ENCODE measurements at regions of chr4 and their contacts with region 1.

Region 1: DNA sequence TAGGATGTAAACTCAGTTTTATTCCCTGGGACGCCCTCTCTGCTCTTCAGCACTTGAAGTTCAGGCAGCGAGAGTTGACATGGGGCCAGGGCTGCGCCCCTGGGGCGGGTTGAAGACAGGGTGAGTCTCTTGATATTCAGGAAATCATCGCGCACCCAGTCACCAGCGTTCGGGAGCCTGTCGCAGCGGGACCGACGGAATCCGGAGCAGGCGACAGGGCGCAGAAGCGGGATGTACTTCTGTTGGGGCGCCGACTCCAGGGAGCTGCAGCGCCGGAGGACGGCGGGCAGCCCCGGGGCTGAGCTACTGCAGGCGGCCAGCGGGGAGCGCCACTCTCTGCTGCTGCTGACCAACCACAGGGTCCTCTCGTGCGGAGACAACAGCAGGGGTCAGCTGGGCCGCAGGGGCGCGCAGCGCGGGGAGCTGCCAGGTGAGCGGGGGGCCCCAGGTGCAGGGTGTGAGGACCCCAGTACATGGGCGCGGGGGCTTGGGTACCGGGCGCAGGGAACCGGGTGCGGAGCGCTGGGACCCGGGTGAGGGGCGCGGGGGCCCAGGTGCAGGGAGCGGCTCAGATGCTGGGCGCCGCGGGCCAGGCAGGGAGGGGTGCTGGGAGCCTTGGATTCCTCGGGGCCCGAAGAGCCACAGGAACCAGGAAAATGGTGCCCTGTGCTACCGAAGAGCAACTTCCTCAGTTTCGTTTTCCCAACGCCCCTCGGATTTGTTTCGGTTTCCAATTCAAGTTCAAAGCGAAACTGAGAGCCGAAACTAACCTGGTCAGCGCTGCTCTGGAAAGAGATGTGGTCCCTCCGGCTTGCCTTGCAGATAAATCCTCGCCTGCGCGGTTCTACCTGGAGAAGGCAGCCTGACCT is at the start of gene HERC6:
- DNase-seq: peak; percentile 84
- H3K4me3 Mint-ChIP-seq: peak within 1 kb of the TSS; percentile 85
- H3K27ac Mint-ChIP-seq: peak within 1 kb of the TSS; percentile 69
- H3K4me1 Mint-ChIP-seq: peaks cover 40% of the 10 kb centered on the region
- H3K27me3 Mint-ChIP-seq: no peaks in the 10 kb centered on the region
- total RNA-seq, gene HERC6: 9.9 to 10.2 TPM

Region 2: DNA sequence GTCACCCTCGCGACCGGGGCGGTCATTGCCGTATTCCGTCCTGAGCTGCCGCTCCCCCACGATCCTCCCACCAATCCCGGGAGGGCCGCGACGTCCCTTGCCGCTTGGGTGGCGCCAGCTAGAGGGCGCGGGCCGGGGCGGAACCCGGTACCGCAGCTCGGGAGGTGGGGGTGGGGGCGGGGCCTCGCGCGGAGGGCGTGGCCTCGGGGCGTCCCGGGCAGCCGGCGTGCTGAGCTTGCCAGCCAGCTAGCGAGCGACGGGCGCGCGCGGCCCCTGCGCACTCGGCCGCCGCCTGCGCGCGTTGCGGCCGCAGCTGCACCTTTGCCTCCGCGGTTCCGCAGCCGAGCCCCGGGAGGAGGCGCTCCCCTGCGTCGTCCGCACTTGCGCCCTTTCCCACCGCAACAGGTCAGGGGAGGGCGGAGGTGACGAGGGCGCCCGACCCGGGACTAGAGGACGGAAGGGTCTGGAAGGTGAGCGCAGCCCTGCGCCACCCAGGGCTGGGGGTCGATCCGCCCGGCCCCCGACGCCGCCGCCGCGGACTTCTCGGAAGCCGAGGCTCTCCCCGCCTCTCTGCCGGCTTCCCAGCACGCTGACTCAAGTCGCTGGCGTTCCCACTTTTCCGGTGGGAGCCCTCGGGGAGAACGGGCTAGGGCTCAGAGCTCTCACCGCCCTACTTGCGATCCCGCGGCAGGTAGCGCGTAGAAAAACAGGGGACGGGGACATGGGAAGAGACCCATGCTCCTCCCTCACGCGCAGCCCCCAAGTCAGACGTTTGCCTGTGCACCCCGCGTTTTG is 1444.0 kb before region 1 on chr4 and contains the start of gene AFF1:
- CTCF ChIA-PET with region 1: no interaction called
- intact Hi-C with region 1: loop called (anchors 5 kb)
- DNase-seq: peak; percentile 89
- H3K4me3 Mint-ChIP-seq: peak within 1 kb of the TSS; percentile 87
- H3K27ac Mint-ChIP-seq: peak within 1 kb of the TSS; percentile 92
- H3K4me1 Mint-ChIP-seq: peaks cover 40% of the 10 kb centered on the region
- H3K27me3 Mint-ChIP-seq: no peaks in the 10 kb centered on the region
- total RNA-seq, gene AFF1: 46.6 to 50.6 TPM

Region 3: DNA sequence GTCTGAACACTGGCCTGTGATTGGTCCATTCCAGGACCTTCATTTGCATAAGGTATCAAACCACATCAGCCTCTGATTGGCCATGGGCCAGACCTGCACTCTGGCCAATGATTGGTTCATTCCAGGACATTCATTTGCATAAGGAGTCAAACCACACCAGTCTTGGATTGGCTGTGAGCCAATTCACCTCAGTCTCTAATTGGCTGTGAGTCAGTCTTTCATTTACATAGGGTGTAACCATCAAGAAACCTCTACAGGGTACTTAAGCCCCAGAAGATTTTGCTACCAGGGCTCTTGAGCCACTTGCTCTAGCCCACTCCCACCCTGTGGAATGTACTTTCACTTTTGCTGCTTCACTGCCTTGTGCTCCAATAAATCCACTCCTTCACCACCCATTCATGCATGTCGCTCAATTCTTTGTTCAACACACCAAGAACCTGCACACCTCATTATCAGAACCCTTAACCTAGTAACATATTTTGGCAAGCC is 63.8 kb after region 1 on chr4:
- CTCF ChIA-PET with region 1: no interaction called
- intact Hi-C with region 1: no loop called
- DNase-seq: no peak
- H3K4me3 Mint-ChIP-seq: no peak overlapping the region
- H3K27ac Mint-ChIP-seq: no peak overlapping the region
- H3K4me1 Mint-ChIP-seq: no peaks in the 10 kb centered on the region
- H3K27me3 Mint-ChIP-seq: no peaks in the 10 kb centered on the region

Region 4: GRCh38 chr4:88456757-88457306 is 77.9 kb after region 1 on chr4 and contains the start of gene HERC5:
- CTCF ChIA-PET with region 1: interaction called, 6 read pairs
- intact Hi-C with region 1: loop called (anchors 1 kb)
- DNase-seq: peak; percentile 93
- H3K4me3 Mint-ChIP-seq: peak within 1 kb of the TSS; percentile 98
- H3K27ac Mint-ChIP-seq: peak within 1 kb of the TSS; percentile 97
- H3K4me1 Mint-ChIP-seq: peaks cover 5% of the 10 kb centered on the region
- H3K27me3 Mint-ChIP-seq: no peaks in the 10 kb centered on the region
- total RNA-seq, gene HERC5: 38.8 to 39.5 TPM

Region 5: GRCh38 chr4:88514557-88515511 is 135.9 kb after region 1 on chr4:
- CTCF ChIA-PET with region 1: interaction called, 19 read pairs
- intact Hi-C with region 1: loop called (anchors 1 kb)
- DNase-seq: no peak
- H3K4me3 Mint-ChIP-seq: no peak overlapping the region
- H3K27ac Mint-ChIP-seq: no peak overlapping the region
- H3K4me1 Mint-ChIP-seq: no peaks in the 10 kb centered on the region
- H3K27me3 Mint-ChIP-seq: no peaks in the 10 kb centered on the region

Region 6: GRCh38 chr4:88591787-88592599 is 213.1 kb after region 1 on chr4 and contains the start of gene HERC3:
- CTCF ChIA-PET with region 1: no interaction called
- intact Hi-C with region 1: loop called (anchors 2 kb)
- DNase-seq: peak; percentile 90
- H3K4me3 Mint-ChIP-seq: peak within 1 kb of the TSS; percentile 98
- H3K27ac Mint-ChIP-seq: peak within 1 kb of the TSS; percentile 83
- H3K4me1 Mint-ChIP-seq: peaks cover 41% of the 10 kb centered on the region
- H3K27me3 Mint-ChIP-seq: no peaks in the 10 kb centered on the region
- total RNA-seq, gene HERC3: 24.4 to 25.8 TPM

Region 7: DNA sequence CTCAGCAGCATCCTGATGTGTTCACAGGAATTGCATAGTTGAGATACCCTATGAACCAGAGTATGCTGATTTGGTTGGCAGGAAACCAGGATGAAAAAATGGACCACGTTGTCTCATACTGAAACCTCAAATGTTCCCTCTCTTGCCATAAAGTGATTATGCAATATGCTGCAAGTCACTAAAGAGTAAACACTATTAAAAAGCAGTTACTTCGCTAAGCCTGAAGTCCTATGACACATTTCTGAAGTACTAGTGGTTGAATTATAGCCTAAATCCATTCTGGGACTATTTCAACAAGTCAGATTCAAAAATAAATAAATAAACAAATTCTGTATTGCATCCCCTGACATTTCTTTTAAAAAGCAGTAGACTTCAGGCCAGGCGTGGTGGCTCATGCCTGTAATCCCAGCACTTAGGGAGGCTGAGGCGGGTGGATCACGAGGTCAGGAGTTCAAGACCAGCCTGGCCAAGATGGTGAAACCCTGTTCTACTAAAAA is 424.7 kb after region 1 on chr4:
- CTCF ChIA-PET with region 1: interaction called, 3 read pairs
- intact Hi-C with region 1: loop called (anchors 1 kb)
- DNase-seq: peak; percentile 60
- H3K4me3 Mint-ChIP-seq: no peak overlapping the region
- H3K27ac Mint-ChIP-seq: no peak overlapping the region
- H3K4me1 Mint-ChIP-seq: peaks cover 22% of the 10 kb centered on the region
- H3K27me3 Mint-ChIP-seq: no peaks in the 10 kb centered on the region

Region 8: GRCh38 chr4:89024051-89024675 is 645.2 kb after region 1 on chr4:
- CTCF ChIA-PET with region 1: no interaction called
- intact Hi-C with region 1: loop called (anchors 10 kb)
- DNase-seq: peak; percentile 71
- H3K4me3 Mint-ChIP-seq: no peak overlapping the region
- H3K27ac Mint-ChIP-seq: no peak overlapping the region
- H3K4me1 Mint-ChIP-seq: peaks cover 4% of the 10 kb centered on the region
- H3K27me3 Mint-ChIP-seq: no peaks in the 10 kb centered on the region

Measured in activated naive CD4-positive, alpha-beta T cell treated with anti-CD3 and anti-CD28 coated beads for 36 hours (primary cell).